Transverse colon (tissue), 4 donors: ENCODE measurements at regions of chr18 and their contacts with region 1.

Region 1: GRCh38 chr18:52723550-52723970 is 383.6 kb downstream of the DCC start:
- DNase-seq: no peak
- H3K4me3 ChIP-seq: no peak overlapping the region
- H3K27ac ChIP-seq: no peak overlapping the region
- H3K4me1 ChIP-seq: no peaks in the 10 kb centered on the region
- H3K27me3 ChIP-seq: no peaks in the 10 kb centered on the region
- CTCF ChIP-seq: no peak
- EP300 ChIP-seq: no peak
- POLR2A ChIP-seq: no peak

Region 2: DNA sequence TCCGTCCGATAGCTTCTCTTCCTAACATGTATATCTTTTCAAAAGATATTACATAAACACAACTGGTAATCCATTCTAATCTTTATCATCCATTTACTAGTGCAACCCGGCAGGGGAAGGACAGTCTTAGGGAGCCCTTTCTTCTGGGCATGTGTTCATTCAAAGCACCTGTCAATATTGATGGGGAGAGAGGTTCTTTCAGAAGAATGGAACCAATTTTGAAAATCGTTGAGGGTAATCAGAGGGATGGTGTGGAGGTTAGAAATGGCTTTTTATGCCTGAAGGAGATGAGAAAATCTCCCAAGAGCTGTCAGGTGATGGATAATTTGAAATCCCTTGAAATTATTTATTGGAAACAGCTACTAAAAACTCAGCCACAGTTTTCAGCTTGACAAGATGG is 945.4 kb before region 1 on chr18:
- in situ Hi-C with region 1: no loop called
- intact Hi-C with region 1: loop called (anchors 5 kb)
- DNase-seq: no peak
- H3K4me3 ChIP-seq: no peak overlapping the region
- H3K27ac ChIP-seq: no peak overlapping the region
- H3K4me1 ChIP-seq: no peaks in the 10 kb centered on the region
- H3K27me3 ChIP-seq: no peaks in the 10 kb centered on the region
- CTCF ChIP-seq: no peak
- EP300 ChIP-seq: no peak
- POLR2A ChIP-seq: no peak

Region 3: DNA sequence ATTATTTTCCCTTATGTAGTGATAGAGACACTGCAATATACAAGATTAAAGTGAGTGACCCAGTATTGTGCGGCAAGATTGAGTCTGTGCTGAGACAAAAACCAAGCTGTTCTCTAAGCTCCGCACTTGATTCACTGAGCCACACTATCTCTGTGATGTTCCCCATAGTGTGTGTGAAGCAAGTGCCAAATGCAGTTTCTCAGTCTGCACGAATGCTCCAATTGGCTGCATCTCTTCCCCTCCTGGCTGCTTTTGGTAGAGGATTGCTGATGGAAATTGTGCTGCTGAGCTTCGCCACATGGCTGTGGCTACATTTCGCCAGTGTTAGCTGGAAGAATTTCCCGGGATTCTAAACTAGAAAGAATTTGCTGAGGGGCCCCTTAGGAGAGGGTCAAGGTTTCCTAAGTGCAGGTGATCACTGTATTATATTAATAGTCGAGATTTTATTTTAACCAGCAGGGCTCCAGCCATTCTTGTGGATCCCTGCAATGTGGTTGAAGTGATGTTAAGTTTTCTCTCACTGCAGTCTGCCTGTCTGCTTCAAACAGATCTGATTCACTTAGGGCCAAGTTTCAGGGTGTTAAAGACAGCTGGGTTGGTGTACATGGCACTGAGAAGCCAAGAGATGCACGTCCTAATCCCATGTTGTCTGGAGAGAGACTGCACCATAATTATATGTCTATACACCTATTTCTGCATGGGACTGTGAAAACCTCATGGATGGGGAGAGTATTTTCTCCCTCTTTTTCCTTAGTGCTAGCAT is 66.3 kb before region 1 on chr18:
- in situ Hi-C with region 1: no loop called
- intact Hi-C with region 1: no loop called
- DNase-seq: no peak
- H3K4me3 ChIP-seq: no peak overlapping the region
- H3K27ac ChIP-seq: no peak overlapping the region
- H3K4me1 ChIP-seq: no peaks in the 10 kb centered on the region
- H3K27me3 ChIP-seq: no peaks in the 10 kb centered on the region
- CTCF ChIP-seq: no peak
- EP300 ChIP-seq: no peak
- POLR2A ChIP-seq: no peak

Region 4: DNA sequence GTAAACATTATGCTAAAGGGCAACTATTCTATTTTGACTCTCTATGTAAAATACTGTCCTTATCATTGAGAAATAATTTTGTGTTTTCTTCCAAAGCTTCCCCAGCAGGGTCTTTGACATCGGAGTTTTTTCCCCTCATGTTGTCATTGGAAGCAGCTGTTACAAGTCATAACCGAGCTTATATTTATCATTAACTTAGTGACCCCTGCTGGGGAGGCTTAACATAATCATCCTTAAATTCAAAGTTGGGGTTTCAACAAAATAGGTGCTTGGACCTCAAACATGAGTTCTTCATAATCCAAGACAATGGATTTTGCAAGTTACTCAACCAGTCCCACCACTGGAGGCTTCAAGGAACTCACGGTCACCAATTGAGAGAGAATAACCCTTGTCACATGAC is 52.7 kb before region 1 on chr18:
- in situ Hi-C with region 1: no loop called
- intact Hi-C with region 1: no loop called
- DNase-seq: no peak
- H3K4me3 ChIP-seq: no peak overlapping the region
- H3K27ac ChIP-seq: no peak overlapping the region
- H3K4me1 ChIP-seq: no peaks in the 10 kb centered on the region
- H3K27me3 ChIP-seq: no peaks in the 10 kb centered on the region
- CTCF ChIP-seq: peak in 1 of 5 experiments; percentile 7
- EP300 ChIP-seq: no peak
- POLR2A ChIP-seq: no peak

Region 5: DNA sequence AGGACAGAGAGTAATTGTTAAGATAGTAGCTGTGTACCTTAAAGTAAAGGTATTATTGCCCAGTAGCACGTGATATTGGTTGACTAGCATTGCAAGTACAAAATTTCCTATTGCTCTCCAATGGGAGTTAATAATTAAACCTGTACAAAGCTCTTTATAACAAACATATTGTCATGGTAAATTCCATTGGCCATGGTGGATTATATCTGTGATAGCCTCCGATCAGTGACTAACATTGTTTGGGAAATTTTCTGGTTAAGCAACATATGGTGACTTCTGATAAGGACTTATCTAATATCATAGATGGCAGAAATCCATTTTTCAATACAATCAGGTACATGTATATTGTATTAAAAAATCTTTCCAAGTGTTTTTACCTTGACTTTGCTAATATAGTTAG is 22.7 kb before region 1 on chr18:
- in situ Hi-C with region 1: no loop called
- intact Hi-C with region 1: no loop called
- DNase-seq: no peak
- H3K4me3 ChIP-seq: no peak overlapping the region
- H3K27ac ChIP-seq: peak overlapping the region in 2 of 4 donors; percentile 44 to 70
- H3K4me1 ChIP-seq: peaks cover 0 to 4% (median 0%) of the 10 kb centered on the region in 4 donors
- H3K27me3 ChIP-seq: no peaks in the 10 kb centered on the region
- CTCF ChIP-seq: no peak
- EP300 ChIP-seq: no peak
- POLR2A ChIP-seq: no peak

Region 6: GRCh38 chr18:52936931-52937330 is 213.4 kb after region 1 on chr18:
- in situ Hi-C with region 1: no loop called
- intact Hi-C with region 1: no loop called
- DNase-seq: no peak
- H3K4me3 ChIP-seq: no peak overlapping the region
- H3K27ac ChIP-seq: no peak overlapping the region
- H3K4me1 ChIP-seq: no peaks in the 10 kb centered on the region
- H3K27me3 ChIP-seq: no peaks in the 10 kb centered on the region
- CTCF ChIP-seq: no peak
- EP300 ChIP-seq: no peak
- POLR2A ChIP-seq: no peak